ENCODE measurements at regions of chr3 and their contacts with region 1.

Region 1: GRCh38 chr3:30768703-30769685 is 125.5 kb downstream of the GADL1 start:
- DNase-seq: peak; percentile 65 to 68
- ATAC-seq: peak in 5 of 8 donors; percentile 29 to 51 (median 33)
- H3K4me3 ChIP-seq: no peak overlapping the region
- H3K27ac ChIP-seq: no peak overlapping the region
- H3K4me1 ChIP-seq: peaks cover 0 to 10% (median 0%) of the 10 kb centered on the region in 9 donors
- H3K27me3 ChIP-seq: no peaks in the 10 kb centered on the region
- CTCF ChIP-seq: peak; percentile 55 to 89 (median 80)

Region 2: DNA sequence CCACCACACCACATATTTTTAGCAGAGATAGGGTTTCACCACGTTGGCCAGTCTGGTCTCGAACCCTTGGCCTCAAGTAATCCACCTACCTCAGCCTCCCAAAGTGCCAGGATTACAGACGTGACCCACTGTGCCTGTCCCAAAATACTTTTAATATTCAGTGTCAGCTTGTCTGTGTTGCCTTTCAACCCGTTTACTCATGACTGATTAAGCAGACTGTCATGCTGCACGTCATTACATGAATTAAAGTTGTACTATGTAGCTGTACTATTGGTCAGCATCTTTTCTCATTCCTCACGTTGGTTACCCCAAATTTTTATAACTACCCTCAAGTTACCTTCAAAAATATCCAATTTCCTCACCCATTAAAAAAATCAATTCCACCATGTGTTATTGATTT is 174.2 kb after region 1 on chr3:
- intact Hi-C with region 1: loop called in 1 of 10 experiments (anchors 5 kb)
- DNase-seq: no peak
- ATAC-seq: no peak
- H3K4me3 ChIP-seq: no peak overlapping the region
- H3K27ac ChIP-seq: no peak overlapping the region
- H3K4me1 ChIP-seq: no peaks in the 10 kb centered on the region
- H3K27me3 ChIP-seq: no peaks in the 10 kb centered on the region
- CTCF ChIP-seq: no peak

Region 3: GRCh38 chr3:31132132-31132769 is 363.3 kb after region 1 on chr3:
- intact Hi-C with region 1: loop called in 9 of 10 experiments (anchors 2 to 10 kb)
- DNase-seq: no peak
- ATAC-seq: peak in 3 of 8 donors; percentile 19 to 64 (median 55)
- H3K4me3 ChIP-seq: no peak overlapping the region
- H3K27ac ChIP-seq: no peak overlapping the region
- H3K4me1 ChIP-seq: no peaks in the 10 kb centered on the region
- H3K27me3 ChIP-seq: no peaks in the 10 kb centered on the region
- CTCF ChIP-seq: peak; percentile 16 to 79 (median 59)

Region 4: DNA sequence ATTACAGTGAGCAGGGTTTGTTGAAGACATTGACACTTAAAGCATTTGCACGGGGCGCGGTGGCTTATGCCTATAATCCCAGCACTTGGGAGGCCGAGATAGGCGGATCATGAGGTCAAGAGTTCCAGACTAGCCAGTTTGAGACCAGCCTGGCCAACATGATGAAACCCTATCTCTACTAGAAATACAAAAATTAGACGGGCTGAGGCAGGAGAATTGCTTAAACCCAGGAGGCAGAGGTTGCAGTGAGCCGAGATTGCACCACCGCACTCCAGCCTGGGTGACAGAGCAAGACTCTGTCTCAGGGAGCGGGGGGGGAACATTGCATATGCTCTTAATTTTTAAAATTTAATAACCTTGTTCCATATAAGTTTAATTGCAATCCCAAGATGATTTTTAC is 775.6 kb after region 1 on chr3:
- intact Hi-C with region 1: loop called in 1 of 10 experiments (anchors 10 kb)
- DNase-seq: peak in 1 of 2 donors; percentile 22
- ATAC-seq: peak in 6 of 8 donors; percentile 25 to 73 (median 52)
- H3K4me3 ChIP-seq: peak overlapping the region in 1 of 10 donors; percentile 1
- H3K27ac ChIP-seq: peak overlapping the region in 3 of 10 donors; percentile 4 to 10 (median 7)
- H3K4me1 ChIP-seq: peaks cover 3 to 89% (median 37%) of the 10 kb centered on the region in 9 donors
- H3K27me3 ChIP-seq: no peaks in the 10 kb centered on the region
- CTCF ChIP-seq: no peak

Region 5: GRCh38 chr3:31768479-31769123 is 999.6 kb after region 1 on chr3:
- intact Hi-C with region 1: loop called in 3 of 10 experiments (anchors 5 to 10 kb)
- DNase-seq: peak in 1 of 2 donors; percentile 70
- ATAC-seq: peak in 7 of 8 donors; percentile 57 to 76 (median 68)
- H3K4me3 ChIP-seq: no peak overlapping the region
- H3K27ac ChIP-seq: no peak overlapping the region
- H3K4me1 ChIP-seq: peaks cover 0 to 6% (median 0%) of the 10 kb centered on the region in 9 donors
- H3K27me3 ChIP-seq: no peaks in the 10 kb centered on the region
- CTCF ChIP-seq: peak; percentile 50 to 81 (median 77)

Region 6: DNA sequence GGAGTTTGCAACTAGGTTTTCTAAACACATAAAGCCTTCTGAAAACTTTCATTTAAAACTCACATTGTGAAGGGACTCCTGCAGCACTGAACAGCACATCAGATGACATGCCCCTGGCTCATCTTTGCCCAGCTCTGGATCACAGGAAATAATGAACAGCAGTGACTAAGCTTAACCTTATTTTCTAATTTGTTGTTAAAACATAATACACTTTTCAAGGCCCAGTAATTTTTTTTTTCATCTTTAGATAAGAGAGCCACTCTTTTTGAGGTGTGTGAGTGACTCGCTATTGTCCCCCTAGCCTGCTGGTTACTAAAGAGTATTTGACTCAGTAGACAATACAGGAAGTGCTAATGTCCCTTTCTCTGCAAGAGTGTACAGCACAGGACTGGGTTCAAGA is 1008.1 kb after region 1 on chr3:
- intact Hi-C with region 1: loop called in 1 of 10 experiments (anchors 10 kb)
- DNase-seq: no peak
- ATAC-seq: no peak
- H3K4me3 ChIP-seq: no peak overlapping the region
- H3K27ac ChIP-seq: no peak overlapping the region
- H3K4me1 ChIP-seq: no peaks in the 10 kb centered on the region
- H3K27me3 ChIP-seq: no peaks in the 10 kb centered on the region
- CTCF ChIP-seq: no peak

Measured in heart right ventricle (tissue), 16 donors.